ENCODE measurements at regions of chr3 and their contacts with region 1.

Region 1: GRCh38 chr3:184017672-184018423 is at the start of gene ABCC5:
- DNase-seq: peak; percentile 62 to 84 (median 79)
- ATAC-seq: peak; percentile 96
- H3K4me3 ChIP-seq: peak within 1 kb of the TSS; percentile 100
- H3K4me3 Mint-ChIP-seq: peak within 1 kb of the TSS; percentile 96 to 100 (median 99)
- H3K27ac ChIP-seq: peak within 1 kb of the TSS; percentile 72
- H3K27ac Mint-ChIP-seq: peak within 1 kb of the TSS; percentile 70 to 95 (median 91)
- H3K4me1 ChIP-seq: peaks cover 8 to 14% of the 10 kb centered on the region in 2 donors
- H3K4me1 Mint-ChIP-seq: peaks cover 11 to 33% (median 25%) of the 10 kb centered on the region in 7 donors
- H3K27me3 ChIP-seq: no peaks in the 10 kb centered on the region
- H3K27me3 Mint-ChIP-seq: peaks cover 5 to 15% (median 9%) of the 10 kb centered on the region in 5 donors
- total RNA-seq, gene ABCC5: 15.6 to 50.4 (median 25.5) TPM

Region 2: GRCh38 chr3:183895296-183895695 is 122.6 kb before region 1 on chr3:
- CTCF ChIA-PET with region 1: interaction called, 6 read pairs
- POLR2A ChIA-PET with region 1: no interaction called
- intact Hi-C with region 1: loop called (anchors 1 kb)
- DNase-seq: peak in 7 of 9 donors; percentile 19 to 67 (median 49)
- ATAC-seq: peak; percentile 91
- H3K4me3 ChIP-seq: no peak overlapping the region
- H3K4me3 Mint-ChIP-seq: no peak overlapping the region
- H3K27ac ChIP-seq: no peak overlapping the region
- H3K27ac Mint-ChIP-seq: peak overlapping the region in 1 of 9 donors; percentile 18
- H3K4me1 ChIP-seq: no peaks in the 10 kb centered on the region
- H3K4me1 Mint-ChIP-seq: peaks cover 0 to 6% (median 0%) of the 10 kb centered on the region in 7 donors
- H3K27me3 ChIP-seq: peaks cover 0 to 3% of the 10 kb centered on the region in 2 donors
- H3K27me3 Mint-ChIP-seq: peaks cover 7 to 29% (median 11%) of the 10 kb centered on the region in 5 donors

Region 3: GRCh38 chr3:183904833-183905780 is 112.7 kb before region 1 on chr3:
- CTCF ChIA-PET with region 1: no interaction called
- POLR2A ChIA-PET with region 1: no interaction called
- intact Hi-C with region 1: loop called (anchors 1 to 2 kb)
- DNase-seq: no peak
- ATAC-seq: no peak
- H3K4me3 ChIP-seq: no peak overlapping the region
- H3K4me3 Mint-ChIP-seq: no peak overlapping the region
- H3K27ac ChIP-seq: no peak overlapping the region
- H3K27ac Mint-ChIP-seq: no peak overlapping the region
- H3K4me1 ChIP-seq: no peaks in the 10 kb centered on the region
- H3K4me1 Mint-ChIP-seq: no peaks in the 10 kb centered on the region
- H3K27me3 ChIP-seq: no peaks in the 10 kb centered on the region
- H3K27me3 Mint-ChIP-seq: peaks cover 5 to 17% (median 8%) of the 10 kb centered on the region in 5 donors

Region 4: GRCh38 chr3:184003187-184003967 is 14.5 kb before region 1 on chr3:
- CTCF ChIA-PET with region 1: interaction called, 3 read pairs
- POLR2A ChIA-PET with region 1: interaction called, 10 read pairs
- intact Hi-C with region 1: no loop called
- DNase-seq: no peak
- ATAC-seq: no peak
- H3K4me3 ChIP-seq: no peak overlapping the region
- H3K4me3 Mint-ChIP-seq: no peak overlapping the region
- H3K27ac ChIP-seq: no peak overlapping the region
- H3K27ac Mint-ChIP-seq: no peak overlapping the region
- H3K4me1 ChIP-seq: no peaks in the 10 kb centered on the region
- H3K4me1 Mint-ChIP-seq: peaks cover 10 to 12% (median 11%) of the 10 kb centered on the region in 7 donors
- H3K27me3 ChIP-seq: no peaks in the 10 kb centered on the region
- H3K27me3 Mint-ChIP-seq: no peaks in the 10 kb centered on the region

Region 5: GRCh38 chr3:184174646-184175492 is 157.0 kb after region 1 on chr3 and contains the start of gene AP2M1:
- CTCF ChIA-PET with region 1: no interaction called
- POLR2A ChIA-PET with region 1: interaction called, 3 read pairs
- intact Hi-C with region 1: loop called (anchors 1 kb)
- DNase-seq: peak; percentile 98 to 99 (median 98)
- ATAC-seq: peak; percentile 98
- H3K4me3 ChIP-seq: peak within 1 kb of the TSS; percentile 82
- H3K4me3 Mint-ChIP-seq: peak within 1 kb of the TSS; percentile 89 to 98 (median 96)
- H3K27ac ChIP-seq: peak within 1 kb of the TSS; percentile 95
- H3K27ac Mint-ChIP-seq: peak within 1 kb of the TSS; percentile 75 to 94 (median 90)
- H3K4me1 ChIP-seq: peaks cover 18 to 20% of the 10 kb centered on the region in 2 donors
- H3K4me1 Mint-ChIP-seq: peaks cover 14 to 46% (median 38%) of the 10 kb centered on the region in 7 donors
- H3K27me3 ChIP-seq: no peaks in the 10 kb centered on the region
- H3K27me3 Mint-ChIP-seq: no peaks in the 10 kb centered on the region
- total RNA-seq, gene AP2M1: 111 to 217 (median 185) TPM

Measured in naive thymus-derived CD4-positive, alpha-beta T cell (primary cell).